ENCODE measurements at regions of chr13 and their contacts with region 1.

Region 1: DNA sequence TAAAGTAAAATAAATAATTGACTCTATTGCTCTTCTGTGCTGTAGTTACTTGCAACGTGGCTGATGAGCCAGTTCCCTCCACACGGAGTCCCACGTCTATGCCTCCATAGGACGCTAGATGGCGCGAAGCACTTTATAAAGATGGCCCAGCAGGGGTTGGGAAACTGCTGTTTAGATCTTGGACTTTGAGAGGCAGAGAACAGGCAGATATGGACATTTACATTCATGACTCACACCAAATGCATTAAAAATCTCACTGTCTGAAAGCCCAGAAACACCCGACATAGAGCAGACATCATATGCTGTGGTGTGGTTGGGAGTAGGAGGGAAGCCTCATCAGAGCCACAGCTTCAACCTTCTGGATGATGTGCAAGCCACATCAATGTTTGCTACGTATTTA is 643.1 kb upstream of the ARGLU1 start:
- DNase-seq: peak in 6 of 9 donors; percentile 11 to 39 (median 24)
- ATAC-seq: peak; percentile 49
- H3K4me3 ChIP-seq: no peak overlapping the region
- H3K4me3 Mint-ChIP-seq: no peak overlapping the region
- H3K27ac ChIP-seq: no peak overlapping the region
- H3K27ac Mint-ChIP-seq: no peak overlapping the region
- H3K4me1 ChIP-seq: no peaks in the 10 kb centered on the region
- H3K4me1 Mint-ChIP-seq: no peaks in the 10 kb centered on the region
- H3K27me3 ChIP-seq: no peaks in the 10 kb centered on the region
- H3K27me3 Mint-ChIP-seq: peaks cover 0 to 10% (median 0%) of the 10 kb centered on the region in 5 donors

Region 2: GRCh38 chr13:107650081-107650701 is 439.1 kb after region 1 on chr13:
- CTCF ChIA-PET with region 1: no interaction called
- POLR2A ChIA-PET with region 1: no interaction called
- intact Hi-C with region 1: loop called in 1 of 2 experiments (anchors 1 kb)
- DNase-seq: peak in 4 of 9 donors; percentile 2 to 24 (median 7)
- ATAC-seq: no peak
- H3K4me3 ChIP-seq: no peak overlapping the region
- H3K4me3 Mint-ChIP-seq: no peak overlapping the region
- H3K27ac ChIP-seq: no peak overlapping the region
- H3K27ac Mint-ChIP-seq: no peak overlapping the region
- H3K4me1 ChIP-seq: no peaks in the 10 kb centered on the region
- H3K4me1 Mint-ChIP-seq: no peaks in the 10 kb centered on the region
- H3K27me3 ChIP-seq: no peaks in the 10 kb centered on the region
- H3K27me3 Mint-ChIP-seq: peaks cover 0 to 7% (median 0%) of the 10 kb centered on the region in 5 donors

Region 3: DNA sequence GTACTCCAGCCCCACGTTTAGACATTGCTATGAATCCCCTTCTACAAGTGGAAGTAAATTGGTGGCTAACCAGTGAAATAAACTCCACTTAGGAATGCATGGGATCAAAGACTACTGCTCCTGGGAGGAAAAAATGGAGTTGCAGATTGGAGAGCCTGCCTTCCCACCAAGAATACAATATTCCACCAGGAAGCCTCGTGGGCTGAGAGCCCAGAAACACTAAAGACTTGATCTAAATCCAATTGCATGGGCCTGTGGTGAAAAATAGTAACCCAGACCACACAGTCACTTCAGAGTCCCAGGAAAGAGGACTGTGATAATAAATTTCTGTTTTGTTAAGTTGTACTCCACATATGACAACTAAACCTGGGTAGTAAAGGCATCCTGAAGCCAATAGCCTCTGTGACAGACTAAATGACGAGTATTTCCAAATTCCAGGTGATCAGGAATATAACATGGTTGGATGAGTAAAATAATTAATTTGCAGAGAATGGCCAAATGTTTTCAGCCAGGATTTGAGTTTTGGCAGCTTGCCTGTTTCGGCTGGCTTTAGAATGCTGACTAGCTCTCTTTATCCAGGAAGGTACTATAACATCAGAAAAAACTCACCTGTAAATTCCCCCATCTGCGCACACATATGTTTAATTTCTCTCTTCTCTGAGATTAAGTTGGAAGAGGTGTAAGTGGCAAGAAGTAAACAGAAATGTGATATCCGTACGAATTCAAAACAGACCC is 524.0 kb after region 1 on chr13:
- CTCF ChIA-PET with region 1: no interaction called
- POLR2A ChIA-PET with region 1: no interaction called
- intact Hi-C with region 1: no loop called
- DNase-seq: no peak
- ATAC-seq: no peak
- H3K4me3 ChIP-seq: no peak overlapping the region
- H3K4me3 Mint-ChIP-seq: no peak overlapping the region
- H3K27ac ChIP-seq: no peak overlapping the region
- H3K27ac Mint-ChIP-seq: no peak overlapping the region
- H3K4me1 ChIP-seq: no peaks in the 10 kb centered on the region
- H3K4me1 Mint-ChIP-seq: no peaks in the 10 kb centered on the region
- H3K27me3 ChIP-seq: no peaks in the 10 kb centered on the region
- H3K27me3 Mint-ChIP-seq: no peaks in the 10 kb centered on the region

Region 4: GRCh38 chr13:108155185-108156106 is 944.4 kb after region 1 on chr13:
- CTCF ChIA-PET with region 1: interaction called, 4 read pairs
- POLR2A ChIA-PET with region 1: no interaction called
- intact Hi-C with region 1: loop called (anchors 1 to 2 kb)
- DNase-seq: peak; percentile 10 to 60 (median 47)
- ATAC-seq: peak; percentile 65
- H3K4me3 ChIP-seq: no peak overlapping the region
- H3K4me3 Mint-ChIP-seq: no peak overlapping the region
- H3K27ac ChIP-seq: no peak overlapping the region
- H3K27ac Mint-ChIP-seq: no peak overlapping the region
- H3K4me1 ChIP-seq: no peaks in the 10 kb centered on the region
- H3K4me1 Mint-ChIP-seq: no peaks in the 10 kb centered on the region
- H3K27me3 ChIP-seq: no peaks in the 10 kb centered on the region
- H3K27me3 Mint-ChIP-seq: peaks cover 0 to 25% (median 16%) of the 10 kb centered on the region in 5 donors

Measured in naive thymus-derived CD4-positive, alpha-beta T cell (primary cell).